Heart left ventricle (tissue), 16 donors: ENCODE measurements at regions of chr1 and their contacts with region 1.

Region 1: DNA sequence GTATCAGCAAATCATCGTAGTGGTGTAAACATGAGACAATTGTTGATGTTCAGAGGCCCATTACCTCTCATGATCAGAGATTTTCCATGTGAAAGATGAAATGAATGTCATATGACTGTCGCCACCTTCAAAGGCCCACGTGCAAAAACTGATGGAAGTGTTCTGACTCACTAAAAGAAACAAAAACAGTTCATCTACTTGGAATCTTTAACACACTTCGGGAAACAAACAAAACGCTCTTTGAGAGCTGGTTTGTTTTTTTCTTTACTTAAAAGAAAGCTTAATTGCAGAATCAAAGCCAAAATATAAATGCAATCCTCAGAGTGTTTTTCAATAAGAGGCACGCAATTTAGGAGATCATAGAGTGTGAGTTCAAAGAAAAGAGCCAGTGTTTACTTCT is 100.8 kb downstream of the PLPPR4 start:
- DNase-seq: no peak
- ATAC-seq: no peak
- H3K4me3 ChIP-seq: no peak overlapping the region
- H3K27ac ChIP-seq: no peak overlapping the region
- H3K4me1 ChIP-seq: no peaks in the 10 kb centered on the region
- H3K27me3 ChIP-seq: no peaks in the 10 kb centered on the region
- CTCF ChIP-seq: no peak
- POLR2A ChIP-seq: no peak

Region 2: GRCh38 chr1:99384021-99384420 is 18.9 kb after region 1 on chr1:
- intact Hi-C with region 1: loop called in 1 of 10 experiments (anchors 2 kb)
- DNase-seq: no peak
- ATAC-seq: no peak
- H3K4me3 ChIP-seq: no peak overlapping the region
- H3K27ac ChIP-seq: no peak overlapping the region
- H3K4me1 ChIP-seq: no peaks in the 10 kb centered on the region
- H3K27me3 ChIP-seq: no peaks in the 10 kb centered on the region
- CTCF ChIP-seq: no peak
- POLR2A ChIP-seq: no peak